Dendritic cell treated with granulocyte-macrophage colony-stimulating factor and Interleukin-4, amounts not matched to agents 40 ng/mL and 50 ng/mL, for 4 days (primary cell): ENCODE measurements at regions of chr3 and their contacts with region 1.

Region 1: DNA sequence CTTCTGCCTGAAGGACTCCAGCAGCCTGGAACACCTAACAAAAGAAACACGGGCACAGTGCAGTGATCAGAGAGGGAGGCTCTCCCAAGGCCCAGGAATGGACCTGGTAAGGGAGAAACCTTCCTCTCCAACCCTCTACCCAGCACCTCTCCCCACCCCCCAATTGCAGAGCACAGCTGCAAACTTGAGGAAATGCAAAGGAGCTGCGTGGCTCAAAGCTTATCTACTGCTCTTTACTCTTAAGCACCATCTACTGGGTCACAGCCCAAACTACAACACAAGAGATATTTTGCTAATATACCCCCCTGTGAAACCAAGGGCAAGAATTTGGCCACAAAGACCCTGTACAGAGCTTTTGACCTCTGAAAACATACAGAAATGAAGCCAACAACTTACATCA is 328.3 kb downstream of the OXSM start:
- H3K4me3 Mint-ChIP-seq: no peak overlapping the region
- H3K27ac Mint-ChIP-seq: no peak overlapping the region
- H3K4me1 Mint-ChIP-seq: no peaks in the 10 kb centered on the region
- H3K27me3 Mint-ChIP-seq: no peaks in the 10 kb centered on the region

Region 2: GRCh38 chr3:25354071-25354470 is 764.1 kb before region 1 on chr3:
- intact Hi-C with region 1: loop called (anchors 5 kb)
- H3K4me3 Mint-ChIP-seq: no peak overlapping the region
- H3K27ac Mint-ChIP-seq: no peak overlapping the region
- H3K4me1 Mint-ChIP-seq: no peaks in the 10 kb centered on the region
- H3K27me3 Mint-ChIP-seq: no peaks in the 10 kb centered on the region